ENCODE measurements at regions of chr12 and their contacts with region 1.

Region 1: GRCh38 chr12:108664338-108665258 is 30.9 kb upstream of the SELPLG start:
- DNase-seq: peak; percentile 91
- H3K4me3 Mint-ChIP-seq: no peak overlapping the region
- H3K27ac Mint-ChIP-seq: peak overlapping the region; percentile 34
- H3K4me1 Mint-ChIP-seq: peaks cover 20% of the 10 kb centered on the region
- H3K27me3 Mint-ChIP-seq: no peaks in the 10 kb centered on the region
- CTCF ChIP-seq: peak; percentile 81

Region 2: DNA sequence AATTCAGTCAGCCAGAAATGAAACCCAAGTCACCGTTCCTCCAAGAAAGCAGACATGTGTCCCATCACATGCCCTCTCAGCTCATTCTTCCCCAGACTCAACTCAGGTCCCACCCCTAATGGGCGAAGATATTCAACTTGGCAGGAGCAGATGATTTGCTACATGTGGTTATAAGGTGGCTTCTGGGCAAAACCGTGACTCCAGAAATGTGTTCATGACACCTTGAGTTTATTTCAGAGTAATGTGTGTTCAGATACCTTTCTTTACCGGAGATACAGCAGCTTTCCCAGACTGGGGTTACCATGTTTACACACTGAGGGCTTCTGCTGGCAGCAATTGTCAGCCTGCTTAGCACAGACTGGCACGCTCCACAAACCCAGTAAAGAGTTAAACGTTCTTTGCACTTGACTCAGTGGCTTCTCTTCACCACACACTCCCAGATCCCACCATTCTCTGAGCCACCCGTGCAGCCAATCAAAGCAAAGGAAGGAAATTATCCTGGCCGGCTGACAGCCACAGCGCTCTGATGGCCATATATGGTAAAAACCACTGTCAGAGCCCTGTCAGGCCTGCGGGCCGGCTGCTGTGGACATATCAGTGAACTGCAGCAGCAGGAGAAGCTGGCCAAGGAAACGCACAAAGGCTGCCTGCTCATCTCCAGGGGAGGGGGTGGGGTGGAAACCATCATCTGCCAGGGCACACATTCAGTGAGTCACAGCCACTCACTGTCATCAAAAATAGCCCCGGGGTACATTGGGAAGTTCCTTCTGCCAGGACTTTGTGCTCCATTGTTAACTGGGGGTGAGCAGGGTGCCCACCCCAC is 26.8 kb after region 1 on chr12:
- CTCF ChIA-PET with region 1: interaction called, 3 read pairs
- intact Hi-C with region 1: loop called (anchors 2 kb)
- DNase-seq: peak; percentile 86
- H3K4me3 Mint-ChIP-seq: peak overlapping the region; percentile 51
- H3K27ac Mint-ChIP-seq: peak overlapping the region; percentile 77
- H3K4me1 Mint-ChIP-seq: peaks cover 61% of the 10 kb centered on the region
- H3K27me3 Mint-ChIP-seq: no peaks in the 10 kb centered on the region
- CTCF ChIP-seq: peak; percentile 24

Region 3: GRCh38 chr12:108731105-108731865 is 66.7 kb after region 1 on chr12 and contains the start of gene CORO1C:
- CTCF ChIA-PET with region 1: interaction called, 5 read pairs
- intact Hi-C with region 1: loop called (anchors 2 kb)
- DNase-seq: peak; percentile 100
- H3K4me3 Mint-ChIP-seq: peak within 1 kb of the TSS; percentile 81
- H3K27ac Mint-ChIP-seq: peak within 1 kb of the TSS; percentile 97
- H3K4me1 Mint-ChIP-seq: peaks cover 50% of the 10 kb centered on the region
- H3K27me3 Mint-ChIP-seq: no peaks in the 10 kb centered on the region
- CTCF ChIP-seq: peak; percentile 88
- total RNA-seq, gene CORO1C: 252 and 270 TPM in 2 replicates

Region 4: DNA sequence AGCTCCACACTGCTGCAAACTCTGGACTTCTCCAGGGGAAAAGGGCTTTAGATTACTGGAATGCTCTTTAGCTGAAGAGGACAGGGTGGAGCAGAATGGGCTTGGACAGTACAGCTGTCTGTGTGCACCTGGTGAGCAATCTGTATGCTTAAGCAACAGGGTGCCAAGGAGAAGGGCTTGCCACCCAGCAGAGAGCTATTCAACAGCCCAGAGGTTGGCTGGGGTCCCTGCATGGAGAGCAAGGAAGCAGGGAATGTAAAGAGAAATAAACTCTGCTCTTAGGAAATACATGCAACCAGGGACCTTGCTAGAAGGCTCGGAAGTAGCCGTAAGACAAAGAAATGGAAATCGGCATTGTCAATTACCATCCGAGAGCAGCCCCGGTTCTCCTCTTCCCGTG is 119.7 kb after region 1 on chr12:
- CTCF ChIA-PET with region 1: interaction called, 4 read pairs
- intact Hi-C with region 1: loop called (anchors 5 kb)
- DNase-seq: no peak
- H3K4me3 Mint-ChIP-seq: no peak overlapping the region
- H3K27ac Mint-ChIP-seq: no peak overlapping the region
- H3K4me1 Mint-ChIP-seq: no peaks in the 10 kb centered on the region
- H3K27me3 Mint-ChIP-seq: no peaks in the 10 kb centered on the region
- CTCF ChIP-seq: no peak

Region 5: GRCh38 chr12:108803428-108804105 is 139.0 kb after region 1 on chr12:
- CTCF ChIA-PET with region 1: interaction called, 16 read pairs
- intact Hi-C with region 1: loop called (anchors 1 kb)
- DNase-seq: peak; percentile 78
- H3K4me3 Mint-ChIP-seq: no peak overlapping the region
- H3K27ac Mint-ChIP-seq: no peak overlapping the region
- H3K4me1 Mint-ChIP-seq: no peaks in the 10 kb centered on the region
- H3K27me3 Mint-ChIP-seq: no peaks in the 10 kb centered on the region
- CTCF ChIP-seq: peak; percentile 94

Region 6: DNA sequence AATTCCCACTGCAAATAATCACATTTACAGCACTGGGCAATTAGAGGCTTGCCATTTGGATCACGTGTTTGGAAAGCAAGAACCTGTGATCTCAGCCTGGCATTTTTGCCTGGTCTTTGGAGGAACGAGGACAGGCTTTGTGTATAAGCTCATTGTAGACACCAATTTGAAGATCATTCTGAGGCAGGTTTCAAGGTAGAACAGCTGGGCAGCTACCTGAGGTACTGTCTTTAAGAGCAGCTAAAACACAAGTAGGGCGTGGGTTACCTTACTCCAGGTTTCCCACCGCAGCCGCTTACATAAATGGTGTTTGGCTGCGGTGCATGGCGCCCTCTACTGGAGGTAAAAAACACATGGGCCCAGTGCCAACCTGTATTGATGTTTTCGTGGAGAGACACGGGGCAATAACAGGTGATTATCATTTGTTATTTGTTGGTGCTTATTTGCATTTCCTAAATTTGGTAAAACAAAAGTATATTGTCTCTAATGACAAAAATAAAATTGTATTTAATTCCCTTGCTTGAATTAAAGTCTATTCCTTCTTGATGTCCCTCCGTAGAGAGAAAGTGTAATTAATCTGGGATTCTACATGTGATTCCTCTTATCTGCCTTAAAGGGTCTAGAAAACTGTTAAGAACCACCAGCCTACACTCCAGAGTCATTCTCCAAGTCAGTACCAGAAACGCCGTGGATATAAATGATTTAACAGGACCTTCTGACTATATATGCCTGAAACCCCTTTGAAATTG is 286.6 kb after region 1 on chr12:
- CTCF ChIA-PET with region 1: interaction called, 5 read pairs
- intact Hi-C with region 1: loop called (anchors 2 kb)
- DNase-seq: peak; percentile 81
- H3K4me3 Mint-ChIP-seq: no peak overlapping the region
- H3K27ac Mint-ChIP-seq: no peak overlapping the region
- H3K4me1 Mint-ChIP-seq: no peaks in the 10 kb centered on the region
- H3K27me3 Mint-ChIP-seq: peaks cover 36% of the 10 kb centered on the region
- CTCF ChIP-seq: peak; percentile 87

Region 7: DNA sequence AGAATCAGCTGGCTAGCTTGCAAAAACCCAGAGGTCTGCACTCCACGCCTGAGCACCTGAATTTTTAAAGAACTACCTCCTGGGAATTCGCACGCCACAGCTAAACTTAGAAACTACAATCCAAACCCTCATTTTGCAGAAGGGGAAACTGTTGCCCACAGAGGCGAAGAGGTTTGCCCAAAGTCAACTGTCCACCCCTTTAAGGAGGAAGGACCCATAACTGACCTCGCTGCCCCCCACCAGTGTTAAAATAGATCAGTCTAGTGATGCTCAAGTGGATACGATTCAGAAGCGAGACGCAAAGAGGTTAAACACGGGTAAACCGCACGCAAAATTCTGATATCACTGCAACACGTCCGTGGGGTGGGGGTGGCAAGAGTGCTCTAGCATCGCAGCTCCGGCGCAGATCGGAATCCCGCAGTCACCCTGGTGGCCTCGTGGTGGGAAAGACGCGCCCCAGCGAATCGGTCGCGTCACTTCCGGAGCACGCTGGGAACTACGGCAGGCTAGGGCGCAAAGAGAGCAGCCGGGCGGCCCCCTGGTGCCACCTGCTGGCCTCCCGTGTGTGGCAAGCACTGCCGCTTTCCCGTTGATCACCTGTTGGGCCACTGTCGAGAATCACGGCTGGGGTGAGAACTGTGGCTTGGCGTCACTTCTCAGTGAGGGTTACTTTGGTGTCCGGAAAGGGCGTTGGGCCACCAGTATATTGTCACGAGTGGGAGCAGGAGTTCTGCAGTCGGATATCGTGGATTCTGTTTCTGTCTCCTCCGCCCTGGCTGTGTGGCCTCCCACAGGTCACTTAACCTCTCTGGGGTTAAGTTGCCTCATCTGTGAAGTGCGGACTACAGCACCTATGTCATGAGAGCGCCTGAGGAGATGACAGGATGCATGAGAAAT is 428.7 kb after region 1 on chr12 and contains the start of gene ALKBH2:
- CTCF ChIA-PET with region 1: no interaction called
- intact Hi-C with region 1: loop called (anchors 10 kb)
- DNase-seq: peak; percentile 96
- H3K4me3 Mint-ChIP-seq: peak within 1 kb of the TSS; percentile 68
- H3K27ac Mint-ChIP-seq: peak within 1 kb of the TSS; percentile 53
- H3K4me1 Mint-ChIP-seq: peaks cover 13% of the 10 kb centered on the region
- H3K27me3 Mint-ChIP-seq: no peaks in the 10 kb centered on the region
- CTCF ChIP-seq: peak; percentile 95
- total RNA-seq, gene ALKBH2: 43.1 and 43.2 TPM in 2 replicates

Measured in Calu3 (cell line).